Activated naive CD8-positive, alpha-beta T cell treated with anti-CD3 and anti-CD28 coated beads, Interleukin-2, amount 10 ng/mL, durations not matched to agents 7 days and 5 days (primary cell): ENCODE measurements at regions of chr2 and their contacts with region 1.

Region 1: GRCh38 chr2:162073888-162074645 is at the start of gene DPP4:
- DNase-seq: peak; percentile 79
- ATAC-seq: peak; percentile 85
- H3K4me3 Mint-ChIP-seq: peak within 1 kb of the TSS; percentile 91
- H3K27ac Mint-ChIP-seq: peak within 1 kb of the TSS; percentile 95
- H3K4me1 Mint-ChIP-seq: peaks cover 40% of the 10 kb centered on the region
- H3K27me3 Mint-ChIP-seq: no peaks in the 10 kb centered on the region
- total RNA-seq, gene DPP4: 101 to 107 TPM

Region 2: GRCh38 chr2:161695225-161695624 is 378.8 kb before region 1 on chr2:
- POLR2A ChIA-PET with region 1: no interaction called
- DNase-seq: no peak
- ATAC-seq: no peak
- H3K4me3 Mint-ChIP-seq: no peak overlapping the region
- H3K27ac Mint-ChIP-seq: no peak overlapping the region
- H3K4me1 Mint-ChIP-seq: no peaks in the 10 kb centered on the region
- H3K27me3 Mint-ChIP-seq: peaks cover 8% of the 10 kb centered on the region

Region 3: DNA sequence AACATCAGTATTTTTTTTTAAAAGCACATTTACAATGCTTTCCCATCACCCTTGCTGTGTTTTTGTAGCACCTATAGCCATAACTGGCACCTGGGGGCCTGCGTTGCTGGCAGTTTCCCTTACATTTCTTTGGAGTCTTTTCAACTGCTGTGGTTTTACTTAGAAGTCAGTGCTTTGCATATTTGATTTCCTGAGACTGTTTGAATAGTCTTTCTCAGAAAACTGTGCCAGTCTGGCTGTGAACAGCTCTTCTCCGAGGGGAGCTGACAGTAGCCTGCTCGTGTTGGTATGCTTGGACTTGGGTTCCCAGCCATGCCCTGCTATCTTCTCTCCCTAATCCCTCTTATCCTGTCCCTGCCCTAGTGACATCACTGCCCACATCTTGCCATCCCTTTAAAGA is 81.5 kb before region 1 on chr2:
- POLR2A ChIA-PET with region 1: interaction called, 17 read pairs
- DNase-seq: peak; percentile 50
- ATAC-seq: peak; percentile 87
- H3K4me3 Mint-ChIP-seq: peak overlapping the region; percentile 79
- H3K27ac Mint-ChIP-seq: peak overlapping the region; percentile 94
- H3K4me1 Mint-ChIP-seq: peaks cover 64% of the 10 kb centered on the region
- H3K27me3 Mint-ChIP-seq: no peaks in the 10 kb centered on the region

Region 4: DNA sequence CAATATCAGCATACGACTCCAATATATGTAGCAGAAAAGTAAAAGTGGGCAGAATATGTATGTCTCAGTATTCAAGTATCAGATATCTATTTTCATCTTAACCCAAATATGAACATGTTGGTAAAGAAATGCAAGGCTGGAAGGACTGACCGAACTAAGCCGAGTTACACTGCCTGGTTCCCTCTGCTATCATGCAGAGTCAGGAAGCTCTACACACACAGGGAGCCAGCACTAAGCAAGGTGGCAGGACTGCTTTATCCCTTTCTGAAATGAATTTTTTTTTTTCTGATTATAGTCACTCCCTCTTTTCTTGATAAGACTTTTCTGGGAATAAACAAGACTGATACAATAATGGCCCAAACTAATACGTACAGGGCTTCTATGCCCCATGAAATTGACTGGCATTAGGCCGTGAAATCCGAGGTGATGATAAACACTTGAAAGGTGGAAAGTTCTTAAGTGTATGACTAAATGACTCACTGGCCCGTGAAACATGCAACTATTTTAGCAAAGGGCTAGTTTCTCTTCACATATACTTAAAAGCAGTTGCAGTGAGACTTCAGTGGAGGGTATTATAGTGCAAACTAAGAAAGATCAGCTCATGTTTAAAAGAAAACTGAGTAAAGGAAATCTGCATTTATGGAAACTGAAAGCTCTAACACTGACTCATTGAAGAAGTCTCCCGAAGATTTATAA is 14.9 kb before region 1 on chr2:
- POLR2A ChIA-PET with region 1: interaction called, 18 read pairs
- DNase-seq: no peak
- ATAC-seq: peak; percentile 55
- H3K4me3 Mint-ChIP-seq: peak overlapping the region; percentile 78
- H3K27ac Mint-ChIP-seq: peak overlapping the region; percentile 90
- H3K4me1 Mint-ChIP-seq: peaks cover 80% of the 10 kb centered on the region
- H3K27me3 Mint-ChIP-seq: no peaks in the 10 kb centered on the region

Region 5: GRCh38 chr2:162091325-162092007 is 17.4 kb after region 1 on chr2:
- POLR2A ChIA-PET with region 1: no interaction called
- DNase-seq: no peak
- ATAC-seq: no peak
- H3K4me3 Mint-ChIP-seq: no peak overlapping the region
- H3K27ac Mint-ChIP-seq: no peak overlapping the region
- H3K4me1 Mint-ChIP-seq: peaks cover 12% of the 10 kb centered on the region
- H3K27me3 Mint-ChIP-seq: no peaks in the 10 kb centered on the region

Region 6: DNA sequence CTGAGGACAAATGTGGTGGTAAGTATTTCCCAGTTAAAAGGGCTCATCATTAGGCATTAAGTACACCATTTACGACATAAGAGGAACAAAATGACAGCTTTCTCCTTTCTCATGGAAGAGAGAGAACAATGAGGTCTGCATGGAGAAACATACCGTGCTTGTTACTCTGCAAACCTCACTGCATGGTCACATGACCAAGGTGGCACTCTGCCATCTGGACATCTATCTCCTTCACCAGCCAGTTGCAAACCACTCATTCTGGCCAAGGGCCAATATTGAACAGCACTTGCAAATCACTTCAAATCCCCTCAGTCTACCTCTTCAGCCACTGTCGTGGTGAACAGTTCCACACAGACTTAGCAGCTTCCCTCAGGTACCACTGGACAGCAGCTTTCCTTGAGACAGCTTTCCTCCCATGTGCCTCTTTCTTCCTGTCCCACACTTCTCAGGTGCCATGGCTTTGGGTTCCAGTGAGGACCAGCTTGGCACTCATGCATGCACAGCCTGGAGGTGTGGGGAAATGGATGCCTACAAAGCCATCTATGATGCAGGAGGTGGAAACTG is 29.5 kb after region 1 on chr2:
- POLR2A ChIA-PET with region 1: no interaction called
- DNase-seq: no peak
- ATAC-seq: no peak
- H3K4me3 Mint-ChIP-seq: no peak overlapping the region
- H3K27ac Mint-ChIP-seq: no peak overlapping the region
- H3K4me1 Mint-ChIP-seq: peaks cover 9% of the 10 kb centered on the region
- H3K27me3 Mint-ChIP-seq: peaks cover 4% of the 10 kb centered on the region